Posterior cingulate gyrus (tissue), 11 donors: ENCODE measurements at regions of chr1 and their contacts with region 1.

Region 1: DNA sequence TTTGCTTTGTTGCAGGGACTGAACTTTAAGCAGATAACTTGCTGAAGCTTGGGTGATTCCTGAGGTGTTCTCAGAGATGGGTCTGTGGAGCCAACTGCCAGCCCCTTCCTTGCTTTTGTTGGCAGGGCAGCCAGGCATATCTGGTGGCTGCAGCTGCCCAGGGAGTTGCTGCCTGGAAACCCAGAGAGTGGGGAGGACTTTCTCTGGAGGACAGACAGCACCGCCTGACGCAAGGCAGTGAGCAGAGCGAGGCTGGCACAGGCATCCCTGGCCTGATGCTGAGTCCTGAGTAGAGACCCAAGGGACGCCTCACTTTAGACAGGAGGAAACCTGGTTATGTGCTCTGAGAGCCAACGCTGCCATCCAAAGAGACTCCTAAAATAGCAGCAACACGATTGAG is 9.8 kb upstream of the OLFML2B start:
- DNase-seq: peak in 7 of 10 donors; percentile 38 to 91 (median 45)

Region 2: GRCh38 chr1:161531986-161532643 is 501.3 kb before region 1 on chr1:
- intact Hi-C with region 1: no loop called
- DNase-seq: no peak

Region 3: GRCh38 chr1:161792740-161793139 is 240.7 kb before region 1 on chr1:
- intact Hi-C with region 1: loop called (anchors 1 kb)
- DNase-seq: no peak

Region 4: DNA sequence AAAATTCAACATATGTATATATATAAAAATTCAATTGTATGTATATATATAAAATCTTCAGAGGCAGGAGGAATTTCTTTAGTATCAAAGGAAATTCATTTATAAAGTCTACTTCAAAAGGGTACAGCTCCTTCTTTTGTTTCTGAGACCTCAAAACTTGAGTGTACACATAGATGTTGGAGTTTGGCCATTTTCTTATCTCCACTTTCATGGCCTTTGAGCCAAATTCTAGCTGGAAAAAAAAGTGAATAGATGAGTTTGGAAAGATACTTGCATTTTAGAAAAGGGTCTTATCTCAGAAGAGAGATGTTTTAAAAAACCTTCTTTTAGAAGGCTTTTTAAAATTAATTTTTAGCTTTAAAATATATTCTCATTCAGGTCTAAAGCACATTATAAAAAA is 164.1 kb before region 1 on chr1:
- intact Hi-C with region 1: loop called (anchors 5 kb)
- DNase-seq: no peak